ENCODE measurements at regions of chr1 and their contacts with region 1.

Region 1: DNA sequence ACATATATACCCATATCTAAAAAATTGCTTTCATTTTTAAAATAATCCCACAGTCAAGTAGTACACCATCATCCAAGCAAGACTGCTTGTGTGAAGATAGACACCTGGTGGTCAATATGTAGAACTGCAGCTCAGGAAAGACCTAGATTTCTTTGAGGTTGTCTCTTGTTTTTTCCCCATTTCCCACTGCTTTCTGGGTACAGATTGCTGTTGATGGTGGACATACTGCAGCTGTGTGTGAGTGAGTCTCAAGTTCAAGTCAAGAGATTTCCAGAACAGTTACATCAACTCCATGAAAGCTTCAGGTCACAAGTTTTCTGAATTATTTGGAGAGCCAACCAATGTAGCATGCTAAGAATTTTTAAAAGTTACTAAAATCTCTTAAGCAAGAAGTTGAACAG is 306.4 kb downstream of the DUSP10 start:
- DNase-seq: no peak
- ATAC-seq: peak; percentile 46
- H3K4me3 ChIP-seq: no peak overlapping the region
- H3K27ac ChIP-seq: no peak overlapping the region
- H3K4me1 ChIP-seq: peaks cover 5% of the 10 kb centered on the region
- H3K27me3 ChIP-seq: no peaks in the 10 kb centered on the region
- CTCF ChIP-seq: peak; percentile 83 to 98 (median 86)
- POLR2A ChIP-seq: no peak

Region 2: GRCh38 chr1:220810179-220810653 is 625.3 kb before region 1 on chr1:
- intact Hi-C with region 1: loop called (anchors 10 kb)
- DNase-seq: peak; percentile 82 to 89 (median 87)
- ATAC-seq: peak; percentile 92
- H3K4me3 ChIP-seq: no peak overlapping the region
- H3K27ac ChIP-seq: no peak overlapping the region
- H3K4me1 ChIP-seq: peaks cover 5% of the 10 kb centered on the region
- H3K27me3 ChIP-seq: no peaks in the 10 kb centered on the region
- CTCF ChIP-seq: peak; percentile 79 to 92 (median 92)
- POLR2A ChIP-seq: peak in 1 of 3 donors; percentile 6

Region 3: DNA sequence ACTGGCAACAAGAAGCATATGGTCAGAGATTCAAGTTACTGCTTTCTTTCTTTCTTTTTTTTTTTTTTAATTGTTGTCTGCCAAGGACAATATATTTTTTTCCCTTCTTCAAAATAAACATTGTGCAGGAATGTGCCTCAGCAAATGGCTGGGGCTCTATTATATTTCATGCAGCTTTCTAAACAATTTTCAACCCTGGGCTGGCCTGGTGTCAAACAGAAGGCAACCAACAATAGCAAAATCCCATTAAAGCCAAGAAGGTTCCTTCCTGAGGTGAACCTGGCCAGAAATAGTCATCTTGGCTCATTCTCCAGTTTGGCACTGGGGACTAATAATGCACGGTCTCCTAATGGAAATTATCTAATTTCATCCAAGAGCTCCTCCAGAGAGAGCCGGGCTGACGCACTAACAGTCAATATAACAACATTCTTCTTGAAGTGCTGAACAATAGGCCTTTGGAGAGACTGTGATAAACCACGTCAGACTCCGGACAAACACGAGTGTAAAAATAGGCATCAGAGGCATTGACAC is 592.0 kb before region 1 on chr1:
- intact Hi-C with region 1: no loop called
- DNase-seq: peak in 1 of 4 donors; percentile 9
- ATAC-seq: peak; percentile 59
- H3K4me3 ChIP-seq: no peak overlapping the region
- H3K27ac ChIP-seq: no peak overlapping the region
- H3K4me1 ChIP-seq: no peaks in the 10 kb centered on the region
- H3K27me3 ChIP-seq: no peaks in the 10 kb centered on the region
- CTCF ChIP-seq: no peak
- POLR2A ChIP-seq: no peak

Region 4: DNA sequence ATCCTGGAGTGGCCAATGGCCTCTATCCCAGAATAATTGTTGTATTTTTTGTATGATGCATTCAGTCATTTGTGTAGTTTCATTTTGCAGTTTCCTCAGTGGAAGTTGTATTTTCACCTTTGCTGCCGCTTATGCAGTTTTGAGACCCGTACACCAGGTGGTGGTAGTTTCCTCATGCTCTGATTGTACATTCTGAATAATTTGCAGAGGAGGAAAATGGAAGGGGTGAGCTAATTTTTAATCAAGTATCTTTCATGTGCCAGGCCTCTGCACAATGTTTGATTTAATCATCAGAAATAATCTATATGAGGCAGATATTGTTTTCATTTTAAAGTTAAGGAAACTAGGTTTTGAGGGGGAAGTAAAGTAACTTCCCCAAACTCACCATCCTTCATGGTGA is 526.7 kb before region 1 on chr1:
- intact Hi-C with region 1: loop called (anchors 10 kb)
- DNase-seq: peak; percentile 26 to 44 (median 38)
- ATAC-seq: peak; percentile 62
- H3K4me3 ChIP-seq: no peak overlapping the region
- H3K27ac ChIP-seq: no peak overlapping the region
- H3K4me1 ChIP-seq: no peaks in the 10 kb centered on the region
- H3K27me3 ChIP-seq: no peaks in the 10 kb centered on the region
- CTCF ChIP-seq: peak in 6 of 7 experiments; percentile 31 to 80 (median 70)
- POLR2A ChIP-seq: no peak

Measured in body of pancreas (tissue), 4 donors.